ENCODE measurements at regions of chr10 and their contacts with region 1.

Region 1: DNA sequence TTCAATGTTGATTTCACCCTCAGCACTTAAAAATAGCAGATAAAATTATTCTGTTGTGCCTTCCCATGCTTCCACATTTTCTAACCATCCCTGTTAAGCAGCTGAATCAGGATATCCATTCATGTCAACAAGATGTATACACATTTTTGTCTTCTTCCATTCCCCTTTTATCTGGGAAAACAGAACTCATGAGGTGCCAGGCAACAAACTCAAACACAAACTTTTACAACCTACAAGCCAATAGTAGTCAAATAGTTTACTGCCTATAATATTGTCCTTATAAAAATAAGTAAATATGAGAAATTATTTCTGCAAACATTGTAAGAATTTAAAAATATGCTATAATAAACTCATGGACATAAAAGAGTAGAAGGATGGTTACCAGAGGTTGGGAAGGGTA is 1569.8 kb downstream of the REEP3 start:
- DNase-seq: no peak
- ATAC-seq: peak; percentile 98
- H3K4me3 ChIP-seq: no peak overlapping the region
- H3K27ac ChIP-seq: no peak overlapping the region
- H3K4me1 ChIP-seq: no peaks in the 10 kb centered on the region
- H3K27me3 ChIP-seq: no peaks in the 10 kb centered on the region
- CTCF ChIP-seq: no peak

Region 2: GRCh38 chr10:65110029-65110428 is 19.0 kb after region 1 on chr10:
- CTCF ChIA-PET with region 1: no interaction called
- POLR2A ChIA-PET with region 1: no interaction called
- intact Hi-C with region 1: loop called (anchors 1 kb)
- DNase-seq: peak; percentile 75
- ATAC-seq: peak; percentile 65; the same call in 1 of the 2 replicates
- H3K4me3 ChIP-seq: no peak overlapping the region
- H3K27ac ChIP-seq: no peak overlapping the region
- H3K4me1 ChIP-seq: peaks cover 11% of the 10 kb centered on the region
- H3K27me3 ChIP-seq: no peaks in the 10 kb centered on the region
- CTCF ChIP-seq: no peak

Measured in PC-3 (cell line).